Activated CD4-positive, alpha-beta T cell treated with anti-CD3 and anti-CD28 coated beads, Interleukin-2, amount 10 ng/mL, durations not matched to agents 24 days and 14 days (primary cell): ENCODE measurements at regions of chr19 and their contacts with region 1.

Region 1: GRCh38 chr19:55516878-55517620 is 19.9 kb downstream of the SBK2 start:
- DNase-seq: peak; percentile 97
- H3K4me3 Mint-ChIP-seq: peak overlapping the region; percentile 72
- H3K27ac Mint-ChIP-seq: no peak overlapping the region
- H3K4me1 Mint-ChIP-seq: peaks cover 3% of the 10 kb centered on the region
- H3K27me3 Mint-ChIP-seq: peaks cover 3% of the 10 kb centered on the region

Region 2: GRCh38 chr19:55580628-55581144 is 63.6 kb after region 1 on chr19 and contains the start of gene ZNF579:
- intact Hi-C with region 1: loop called (anchors 2 kb)
- DNase-seq: peak; percentile 94
- H3K4me3 Mint-ChIP-seq: peak within 1 kb of the TSS; percentile 87
- H3K27ac Mint-ChIP-seq: peak within 1 kb of the TSS; percentile 83
- H3K4me1 Mint-ChIP-seq: peaks cover 18% of the 10 kb centered on the region
- H3K27me3 Mint-ChIP-seq: peaks cover 12% of the 10 kb centered on the region
- total RNA-seq, gene ZNF579: 9.6 and 10.4 TPM in 2 replicates

Region 3: DNA sequence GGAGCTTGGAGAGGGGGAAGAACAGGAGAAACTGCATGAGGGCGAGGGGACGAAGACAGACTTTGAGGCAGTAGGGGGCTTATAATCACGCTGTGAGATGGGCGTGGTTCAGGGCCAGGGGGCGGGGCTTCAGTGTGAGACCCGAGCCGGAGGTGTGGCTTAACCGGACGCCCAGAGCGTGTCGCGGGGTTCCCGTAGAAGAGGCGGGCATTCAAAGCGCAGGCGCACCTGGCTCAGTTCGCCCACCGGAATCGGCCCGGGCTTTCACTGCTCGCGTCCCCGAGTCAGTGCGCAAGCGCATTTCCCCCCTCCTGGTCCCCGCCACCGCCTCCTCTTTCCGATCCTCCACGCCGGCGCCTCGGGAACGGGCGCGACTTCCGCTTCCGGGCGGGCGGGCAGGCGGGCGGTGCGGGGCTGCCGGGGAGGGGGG is 88.2 kb after region 1 on chr19:
- intact Hi-C with region 1: loop called (anchors 1 kb)
- DNase-seq: peak; percentile 100
- H3K4me3 Mint-ChIP-seq: peak overlapping the region; percentile 85
- H3K27ac Mint-ChIP-seq: peak overlapping the region; percentile 93
- H3K4me1 Mint-ChIP-seq: peaks cover 46% of the 10 kb centered on the region
- H3K27me3 Mint-ChIP-seq: peaks cover 3% of the 10 kb centered on the region

Region 4: GRCh38 chr19:55624109-55625003 is 107.3 kb after region 1 on chr19 and contains the start of gene ZNF784:
- intact Hi-C with region 1: loop called (anchors 1 kb)
- DNase-seq: peak; percentile 98
- H3K4me3 Mint-ChIP-seq: peak within 1 kb of the TSS; percentile 96
- H3K27ac Mint-ChIP-seq: peak within 1 kb of the TSS; percentile 99
- H3K4me1 Mint-ChIP-seq: peaks cover 43% of the 10 kb centered on the region
- H3K27me3 Mint-ChIP-seq: peaks cover 13% of the 10 kb centered on the region
- total RNA-seq, gene ZNF784: 3.6 and 3.7 TPM in 2 replicates

Region 5: GRCh38 chr19:55632463-55632834 is 115.4 kb after region 1 on chr19:
- intact Hi-C with region 1: loop called (anchors 1 kb)
- DNase-seq: peak; percentile 97
- H3K4me3 Mint-ChIP-seq: no peak overlapping the region
- H3K27ac Mint-ChIP-seq: peak overlapping the region; percentile 3
- H3K4me1 Mint-ChIP-seq: peaks cover 38% of the 10 kb centered on the region
- H3K27me3 Mint-ChIP-seq: peaks cover 13% of the 10 kb centered on the region

Region 6: DNA sequence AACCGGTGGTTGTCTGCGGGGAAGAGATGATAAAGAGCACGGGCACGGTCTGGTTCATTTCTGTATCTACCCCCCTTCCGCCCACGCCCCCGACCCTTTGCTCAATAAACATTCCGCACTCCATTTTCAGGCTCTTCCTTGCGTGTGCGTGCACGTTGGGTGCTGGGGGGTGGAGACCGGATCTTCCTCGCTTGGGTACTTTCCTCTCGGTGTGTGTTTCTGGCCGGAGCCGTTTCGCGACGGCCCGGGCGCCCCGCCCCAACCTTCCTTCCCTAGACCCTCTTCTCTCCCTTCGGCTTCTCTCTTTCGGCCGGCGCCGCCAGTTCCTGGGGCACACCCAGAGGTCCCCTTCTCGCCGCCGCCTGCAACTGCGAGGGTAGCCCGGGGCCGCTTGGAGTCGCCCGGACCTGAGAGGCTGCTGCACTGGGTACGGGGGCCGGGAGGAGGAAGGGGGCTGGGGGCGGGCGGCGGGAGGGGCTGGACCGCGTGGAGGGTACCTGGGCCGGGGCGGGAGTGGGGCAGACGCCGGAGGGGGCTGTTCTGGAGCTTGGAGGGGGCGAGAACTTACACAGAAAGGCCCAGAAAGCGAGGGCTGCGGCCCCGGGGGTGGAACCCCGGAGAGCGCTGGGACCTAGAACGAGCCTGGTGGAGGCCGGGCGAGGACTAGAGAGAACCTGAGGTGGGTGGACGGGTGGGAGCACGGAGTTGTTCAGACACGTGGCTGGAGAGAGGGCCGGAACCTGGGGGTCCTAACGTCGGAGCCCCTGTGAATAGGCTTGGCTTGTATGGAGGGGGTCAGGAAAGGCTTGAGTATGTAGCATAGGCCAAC is 126.5 kb after region 1 on chr19 and contains the start of gene ZNF581:
- intact Hi-C with region 1: no loop called
- DNase-seq: peak; percentile 95
- H3K4me3 Mint-ChIP-seq: peak within 1 kb of the TSS; percentile 90
- H3K27ac Mint-ChIP-seq: peak within 1 kb of the TSS; percentile 98
- H3K4me1 Mint-ChIP-seq: peaks cover 27% of the 10 kb centered on the region
- H3K27me3 Mint-ChIP-seq: no peaks in the 10 kb centered on the region
- total RNA-seq, gene ZNF581: 32.7 and 33.0 TPM in 2 replicates